Activated B cell treated with CpG ODN at 0.5 μM for 24 hours (primary cell): ENCODE measurements at regions of chr10 and their contacts with region 1.

Region 1: DNA sequence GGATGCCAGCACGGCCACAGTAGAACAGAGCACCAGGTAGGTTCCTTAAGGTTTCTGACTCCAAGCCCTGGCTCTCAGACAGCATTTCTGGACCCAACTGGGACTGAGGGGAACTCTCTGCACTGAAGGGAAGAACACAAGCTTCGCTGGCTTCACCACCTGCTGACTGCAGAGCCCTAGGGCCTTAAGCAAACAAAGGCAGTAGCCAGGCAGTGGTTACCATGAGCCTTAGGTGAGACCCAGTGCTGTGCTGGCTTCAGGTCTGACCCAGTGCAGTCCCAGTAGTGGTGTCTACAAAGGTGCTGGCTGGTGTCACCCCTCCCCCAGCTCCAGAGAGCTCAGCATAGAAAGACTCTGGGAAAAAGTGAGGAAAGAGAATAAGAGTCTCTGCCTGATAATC is 59.5 kb downstream of the SIRT1 start:
- DNase-seq: no peak
- ATAC-seq: no peak
- H3K4me3 Mint-ChIP-seq: no peak overlapping the region
- H3K27ac Mint-ChIP-seq: no peak overlapping the region
- H3K4me1 Mint-ChIP-seq: peaks cover 4% of the 10 kb centered on the region
- H3K27me3 Mint-ChIP-seq: no peaks in the 10 kb centered on the region
- CTCF ChIP-seq: no peak

Region 2: GRCh38 chr10:67849331-67850011 is 94.4 kb before region 1 on chr10:
- CTCF ChIA-PET with region 1: no interaction called
- POLR2A ChIA-PET with region 1: no interaction called
- intact Hi-C with region 1: no loop called
- DNase-seq: peak; percentile 90
- ATAC-seq: peak; percentile 95
- H3K4me3 Mint-ChIP-seq: peak overlapping the region; percentile 94
- H3K27ac Mint-ChIP-seq: peak overlapping the region; percentile 96
- H3K4me1 Mint-ChIP-seq: peaks cover 13% of the 10 kb centered on the region
- H3K27me3 Mint-ChIP-seq: no peaks in the 10 kb centered on the region
- CTCF ChIP-seq: no peak

Region 3: DNA sequence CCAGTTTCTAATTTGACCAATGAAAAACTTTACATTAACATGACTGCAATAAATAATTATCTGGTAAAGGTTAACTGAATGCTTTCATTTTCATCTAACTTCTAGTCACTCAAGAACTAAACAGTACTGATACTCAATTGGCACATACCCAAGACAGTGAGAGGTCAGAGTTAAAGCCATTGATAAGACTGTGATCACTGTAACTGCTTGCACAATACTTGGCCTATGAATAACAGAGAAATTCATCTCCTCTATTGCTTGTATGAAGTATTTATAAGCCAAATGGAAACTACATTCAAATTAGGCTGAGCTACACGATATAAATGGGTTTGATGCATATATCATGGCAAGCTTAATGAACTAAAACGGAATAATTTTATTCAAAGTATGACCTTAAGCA is 88.2 kb after region 1 on chr10:
- CTCF ChIA-PET with region 1: no interaction called
- POLR2A ChIA-PET with region 1: no interaction called
- intact Hi-C with region 1: loop called (anchors 5 kb)
- DNase-seq: no peak
- ATAC-seq: no peak
- H3K4me3 Mint-ChIP-seq: no peak overlapping the region
- H3K27ac Mint-ChIP-seq: no peak overlapping the region
- H3K4me1 Mint-ChIP-seq: no peaks in the 10 kb centered on the region
- H3K27me3 Mint-ChIP-seq: no peaks in the 10 kb centered on the region
- CTCF ChIP-seq: no peak